ENCODE measurements at regions of chr7 and their contacts with region 1.

Region 1: DNA sequence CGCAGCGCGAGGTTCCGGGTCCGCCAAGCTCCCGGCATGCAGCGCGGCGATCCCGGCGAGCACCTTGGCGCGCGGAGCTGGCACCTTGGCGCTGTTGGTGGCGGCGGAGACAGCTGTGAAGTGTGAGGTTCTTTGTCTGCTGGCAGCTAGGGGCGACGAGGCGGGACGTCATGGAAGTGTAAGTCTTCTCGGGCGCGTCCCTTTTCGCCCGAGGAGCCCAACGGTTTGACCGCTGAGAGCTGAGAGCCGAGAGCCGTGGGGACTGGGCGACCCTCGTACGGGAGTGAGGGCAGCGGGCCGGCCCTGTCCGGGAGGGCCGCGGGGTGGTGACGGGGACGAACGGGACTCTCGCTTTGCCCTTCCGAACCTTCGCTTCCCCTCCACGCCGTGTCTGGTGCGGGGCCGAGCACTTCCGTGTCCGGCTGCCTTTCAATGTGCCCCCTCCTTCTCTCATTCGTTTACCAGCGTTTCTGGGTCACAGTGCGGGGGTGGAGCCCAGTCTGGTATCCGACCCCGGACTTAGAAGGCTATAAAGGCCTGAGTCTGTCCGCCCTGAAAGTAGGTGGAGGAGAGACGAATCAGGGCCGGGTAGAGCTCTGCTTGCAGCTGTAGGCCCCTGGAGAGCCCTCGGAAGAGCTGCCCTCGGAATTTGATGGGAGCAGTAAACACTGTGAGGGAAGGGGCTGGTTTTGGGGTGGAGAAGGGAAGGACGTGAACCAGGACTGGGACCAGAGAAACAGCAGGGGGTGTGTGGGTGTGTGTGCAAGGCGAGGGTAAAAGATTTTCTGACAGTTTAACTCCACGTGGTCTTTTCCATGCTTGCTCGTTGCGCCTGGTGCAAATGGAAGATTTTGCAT is at the start of gene CRCP:
- DNase-seq: peak; percentile 75
- ATAC-seq: peak; percentile 76
- H3K4me3 ChIP-seq: peak within 1 kb of the TSS; percentile 93
- H3K27ac ChIP-seq: peak within 1 kb of the TSS; percentile 96
- H3K4me1 ChIP-seq: peaks cover 49% of the 10 kb centered on the region
- H3K27me3 ChIP-seq: no peaks in the 10 kb centered on the region
- CTCF ChIP-seq: peak; percentile 48
- total RNA-seq, gene CRCP: 36.4 and 41.6 TPM in 2 replicates

Region 2: GRCh38 chr7:65960351-65961074 is 154.5 kb before region 1 on chr7:
- CTCF ChIA-PET with region 1: no interaction called
- POLR2A ChIA-PET with region 1: no interaction called
- intact Hi-C with region 1: no loop called
- DNase-seq: no peak
- ATAC-seq: no peak
- H3K4me3 ChIP-seq: no peak overlapping the region
- H3K27ac ChIP-seq: no peak overlapping the region
- H3K4me1 ChIP-seq: no peaks in the 10 kb centered on the region
- H3K27me3 ChIP-seq: no peaks in the 10 kb centered on the region
- CTCF ChIP-seq: no peak

Region 3: DNA sequence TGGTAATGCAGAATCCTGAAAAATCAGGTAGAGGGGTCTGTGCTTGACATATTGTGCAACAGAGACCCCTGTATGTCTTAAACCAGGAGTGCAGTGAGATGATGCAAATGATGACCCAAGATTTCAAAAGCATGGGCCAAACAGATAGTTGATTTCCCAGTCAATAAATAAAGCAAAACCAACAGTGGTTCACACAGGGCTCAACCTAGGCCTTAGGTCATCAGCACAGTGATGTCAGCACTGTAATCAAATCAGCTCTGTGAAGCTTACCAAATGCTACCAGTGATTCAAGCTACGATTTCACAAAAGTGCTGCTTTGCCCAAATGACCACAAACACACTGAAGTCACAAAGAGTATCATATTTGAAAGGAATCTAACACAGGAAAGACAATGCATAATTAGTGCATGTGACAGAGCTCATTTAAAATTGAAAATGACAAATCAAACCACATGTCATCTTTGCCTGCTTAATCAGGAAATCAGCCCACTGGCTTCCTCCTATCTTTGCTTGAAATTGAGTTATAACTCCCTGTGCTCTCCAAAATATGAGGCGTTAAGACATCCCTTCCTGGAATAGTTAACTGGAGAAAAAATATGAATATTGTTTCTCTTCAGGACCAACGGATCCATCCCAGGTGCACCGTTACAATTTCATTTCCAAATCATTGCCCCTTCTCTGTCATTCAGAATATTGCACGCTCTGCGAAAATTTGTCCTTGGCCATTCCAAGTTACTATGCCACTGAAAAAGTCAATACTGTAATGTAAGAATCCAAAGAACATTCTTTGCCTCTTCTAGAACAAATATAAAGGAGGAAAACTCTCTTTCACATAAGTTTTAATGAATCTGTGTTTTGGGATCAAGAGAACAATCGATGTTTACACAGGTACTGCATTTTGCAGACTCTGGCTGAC is 81.3 kb before region 1 on chr7:
- CTCF ChIA-PET with region 1: no interaction called
- POLR2A ChIA-PET with region 1: no interaction called
- intact Hi-C with region 1: loop called (anchors 5 kb)
- DNase-seq: no peak
- ATAC-seq: no peak
- H3K4me3 ChIP-seq: no peak overlapping the region
- H3K27ac ChIP-seq: no peak overlapping the region
- H3K4me1 ChIP-seq: no peaks in the 10 kb centered on the region
- H3K27me3 ChIP-seq: no peaks in the 10 kb centered on the region
- CTCF ChIP-seq: no peak

Region 4: DNA sequence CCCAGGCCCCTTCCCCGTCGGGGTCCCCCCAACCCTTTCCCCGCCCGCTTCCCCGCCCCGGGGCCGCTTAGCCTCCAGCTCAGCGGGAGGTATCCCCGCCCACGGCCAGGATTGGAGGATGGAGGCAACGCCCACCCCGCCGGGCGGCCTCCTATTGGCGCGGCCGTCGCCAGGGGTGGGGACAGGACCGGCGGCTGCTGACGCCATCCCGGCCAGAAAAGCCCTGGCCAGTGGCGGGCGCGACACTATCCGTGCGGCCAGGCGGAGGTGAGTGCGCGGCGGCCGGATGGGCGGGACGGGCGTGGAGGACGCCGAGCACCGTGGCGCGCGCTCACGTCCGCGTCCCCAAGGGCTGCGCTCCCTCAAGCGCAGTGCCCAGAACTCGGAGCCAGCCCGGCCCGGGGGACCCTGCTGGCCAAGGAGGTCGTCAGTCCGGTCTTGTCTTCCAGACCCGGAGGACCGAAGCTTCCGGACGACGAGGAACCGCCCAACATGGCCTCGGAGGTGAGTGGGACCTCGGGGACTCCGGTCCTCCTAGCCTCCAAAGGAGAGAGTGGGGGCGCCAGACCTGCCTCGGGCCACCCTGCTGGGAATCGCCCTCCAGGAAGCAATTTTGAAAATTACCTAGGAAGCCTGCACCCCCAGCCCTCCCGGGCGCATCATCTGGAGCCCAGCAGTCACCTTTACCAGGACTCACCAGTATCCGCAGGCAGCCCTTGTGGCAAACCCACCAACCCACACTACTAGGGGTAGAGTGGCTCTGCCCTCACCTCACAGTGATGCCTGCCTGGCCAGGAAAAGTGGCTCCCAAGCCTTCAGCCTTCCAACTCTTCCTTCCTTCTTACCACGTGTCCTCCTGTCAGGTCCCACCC is 39.2 kb before region 1 on chr7 and contains the start of gene ASL:
- CTCF ChIA-PET with region 1: no interaction called
- POLR2A ChIA-PET with region 1: no interaction called
- intact Hi-C with region 1: no loop called
- DNase-seq: peak; percentile 94
- ATAC-seq: peak; percentile 99
- H3K4me3 ChIP-seq: peak within 1 kb of the TSS; percentile 96
- H3K27ac ChIP-seq: no peak within 1 kb of the TSS
- H3K4me1 ChIP-seq: peaks cover 10% of the 10 kb centered on the region; the same call in 1 of the 2 replicates
- H3K27me3 ChIP-seq: no peaks in the 10 kb centered on the region
- CTCF ChIP-seq: no peak
- total RNA-seq, gene ASL: 55.9 and 69.0 TPM in 2 replicates

Region 5: DNA sequence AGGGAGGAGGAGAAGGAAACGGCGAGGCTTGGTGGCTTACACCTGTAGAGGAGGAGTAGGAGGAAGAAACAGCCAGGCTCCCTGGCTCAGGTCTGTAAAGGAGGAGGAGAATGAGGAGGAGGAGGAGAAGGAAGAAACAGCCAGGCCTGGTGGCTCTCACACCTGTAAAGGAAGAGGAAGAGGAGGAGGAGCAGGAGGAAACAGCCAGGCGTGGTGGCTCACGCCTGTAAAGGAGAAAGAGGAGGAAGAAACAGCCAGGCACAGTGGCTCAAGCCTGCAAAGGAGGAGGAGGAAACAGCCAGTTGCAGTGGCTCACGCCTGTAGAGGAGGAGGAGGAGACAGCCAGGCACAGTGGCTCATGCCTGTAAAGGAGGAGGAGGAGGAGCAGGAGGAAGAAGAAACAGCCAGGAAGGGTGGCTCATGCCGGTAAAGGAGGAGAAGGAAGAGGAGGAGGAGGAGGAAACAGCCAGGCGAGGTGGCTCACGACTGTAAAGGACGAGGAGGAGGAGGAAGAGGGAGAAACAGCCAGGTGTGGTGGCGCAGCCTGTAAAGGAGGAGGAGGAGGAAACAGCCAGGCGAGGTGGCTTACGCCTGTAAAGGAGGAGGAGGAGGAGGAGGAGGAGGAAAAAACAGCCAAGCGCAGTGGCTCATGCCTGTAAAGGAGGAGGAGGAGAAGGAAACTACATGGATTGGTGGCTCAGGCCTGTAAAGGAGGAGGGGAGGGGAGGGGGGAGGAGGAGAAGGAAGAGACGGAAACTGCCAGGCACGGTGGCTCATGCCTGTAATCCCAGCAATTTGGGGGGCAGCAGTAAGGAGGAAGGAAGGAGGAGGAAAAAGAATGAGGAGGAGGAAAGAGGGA is 15.2 kb before region 1 on chr7:
- CTCF ChIA-PET with region 1: no interaction called
- POLR2A ChIA-PET with region 1: interaction called, 13 read pairs
- intact Hi-C with region 1: no loop called
- DNase-seq: peak; percentile 89
- ATAC-seq: peak; percentile 91
- H3K4me3 ChIP-seq: peak overlapping the region; percentile 66
- H3K27ac ChIP-seq: peak overlapping the region; percentile 78
- H3K4me1 ChIP-seq: no peaks in the 10 kb centered on the region; the same call in 1 of the 2 replicates
- H3K27me3 ChIP-seq: no peaks in the 10 kb centered on the region
- CTCF ChIP-seq: no peak

Region 6: DNA sequence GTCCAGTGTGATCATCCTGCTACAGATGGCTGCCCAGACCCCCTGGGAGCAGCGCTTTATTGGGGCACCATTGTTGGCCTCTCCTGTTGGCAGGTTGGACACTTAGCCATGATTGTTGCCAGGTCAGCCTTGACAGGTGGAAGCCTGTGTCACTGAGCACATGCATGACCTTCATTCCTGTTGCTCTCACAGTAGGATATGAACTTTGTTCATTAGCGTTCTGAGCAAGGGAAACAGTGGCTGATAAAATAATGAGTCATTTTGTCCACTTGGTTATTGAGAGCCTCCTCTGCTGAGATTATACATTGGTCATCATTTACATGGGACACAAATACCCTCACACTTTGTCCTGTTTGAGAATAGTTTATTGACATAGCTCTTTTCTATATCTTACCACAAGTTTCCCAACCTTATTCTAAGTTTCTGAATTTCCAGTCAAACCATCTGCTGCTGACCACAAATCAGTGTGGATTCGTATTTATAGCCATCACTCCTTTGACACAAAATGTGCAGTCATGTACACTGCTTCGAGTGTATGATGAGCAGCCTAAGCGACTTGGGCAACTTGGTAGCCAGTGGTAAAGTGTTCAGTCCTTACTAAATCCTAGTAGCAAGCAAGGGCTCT is 192.7 kb after region 1 on chr7:
- CTCF ChIA-PET with region 1: no interaction called
- POLR2A ChIA-PET with region 1: no interaction called
- intact Hi-C with region 1: loop called (anchors 10 kb)
- DNase-seq: peak; percentile 76
- ATAC-seq: peak; percentile 83
- H3K4me3 ChIP-seq: no peak overlapping the region
- H3K27ac ChIP-seq: peak overlapping the region; percentile 78
- H3K4me1 ChIP-seq: peaks cover 44% of the 10 kb centered on the region
- H3K27me3 ChIP-seq: no peaks in the 10 kb centered on the region
- CTCF ChIP-seq: no peak

Region 7: DNA sequence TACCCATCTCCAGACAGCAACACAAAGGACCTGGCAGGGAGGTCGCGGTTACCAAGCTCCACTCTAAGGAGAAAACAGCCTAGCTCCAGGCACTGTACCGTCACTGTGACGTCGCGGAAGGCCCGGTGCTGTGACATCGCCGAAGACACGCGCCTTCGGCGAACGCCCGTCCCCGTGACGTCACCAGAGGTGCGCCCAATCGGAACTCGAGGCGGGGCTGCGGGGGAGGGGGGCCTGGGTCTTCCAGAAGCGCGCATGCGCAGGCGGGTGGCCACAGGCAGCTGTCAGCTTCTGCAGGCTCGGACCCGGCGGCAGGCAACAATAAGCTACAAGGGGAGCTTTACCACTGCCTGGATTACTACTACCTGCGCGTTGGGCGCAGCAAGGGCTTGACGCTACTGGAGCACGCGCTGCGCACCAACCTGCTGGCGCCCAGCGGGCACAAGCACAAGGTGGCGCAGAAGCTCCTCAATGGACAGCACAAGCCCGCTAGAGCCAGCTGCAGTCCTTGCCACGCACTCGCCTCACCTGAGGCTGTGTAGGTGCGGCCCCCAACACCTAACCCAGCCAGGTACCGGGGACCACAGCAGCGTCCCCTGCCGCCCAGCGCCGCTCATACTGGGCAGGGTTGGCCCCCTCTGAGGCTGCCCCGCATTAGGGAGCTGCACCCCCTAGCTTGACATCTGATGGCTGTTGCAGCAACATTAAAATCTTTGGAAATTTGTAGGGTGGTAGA is 298.5 kb after region 1 on chr7:
- CTCF ChIA-PET with region 1: no interaction called
- POLR2A ChIA-PET with region 1: no interaction called
- intact Hi-C with region 1: loop called (anchors 10 kb)
- DNase-seq: peak; percentile 67
- ATAC-seq: peak; percentile 92
- H3K4me3 ChIP-seq: peak overlapping the region; percentile 64
- H3K27ac ChIP-seq: no peak overlapping the region
- H3K4me1 ChIP-seq: 0 out of 2 replicates have a peak, but pooled peaks cover 4% of the 10 kb centered on the region
- H3K27me3 ChIP-seq: no peaks in the 10 kb centered on the region
- CTCF ChIP-seq: peak; percentile 57

Region 8: DNA sequence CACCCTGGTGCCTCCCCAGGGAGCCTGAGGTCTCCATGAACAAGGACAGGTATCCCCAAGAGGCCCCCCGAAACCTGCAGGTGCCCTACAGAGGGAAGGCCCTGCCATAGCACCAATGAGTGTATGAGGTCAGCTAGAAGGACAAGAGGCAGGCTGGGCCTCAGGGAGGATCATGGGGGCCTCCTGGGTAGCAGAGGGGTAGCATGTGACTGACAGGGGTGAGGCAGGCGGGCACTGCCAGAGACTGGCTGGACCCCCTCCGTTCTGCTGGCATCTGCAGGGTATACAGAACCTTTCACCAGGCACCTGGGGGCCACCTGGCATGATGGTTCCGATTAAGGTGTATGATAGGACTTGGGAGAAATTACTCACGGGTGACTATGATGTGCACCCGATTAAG is 434.4 kb after region 1 on chr7:
- CTCF ChIA-PET with region 1: no interaction called
- POLR2A ChIA-PET with region 1: no interaction called
- intact Hi-C with region 1: no loop called
- DNase-seq: no peak
- ATAC-seq: no peak
- H3K4me3 ChIP-seq: no peak overlapping the region
- H3K27ac ChIP-seq: no peak overlapping the region
- H3K4me1 ChIP-seq: peaks cover 5% of the 10 kb centered on the region; the same call in 1 of the 2 replicates
- H3K27me3 ChIP-seq: no peaks in the 10 kb centered on the region
- CTCF ChIP-seq: no peak